Right cardiac atrium (tissue), 5 donors: ENCODE measurements at regions of chr5 and their contacts with region 1.

Region 1: DNA sequence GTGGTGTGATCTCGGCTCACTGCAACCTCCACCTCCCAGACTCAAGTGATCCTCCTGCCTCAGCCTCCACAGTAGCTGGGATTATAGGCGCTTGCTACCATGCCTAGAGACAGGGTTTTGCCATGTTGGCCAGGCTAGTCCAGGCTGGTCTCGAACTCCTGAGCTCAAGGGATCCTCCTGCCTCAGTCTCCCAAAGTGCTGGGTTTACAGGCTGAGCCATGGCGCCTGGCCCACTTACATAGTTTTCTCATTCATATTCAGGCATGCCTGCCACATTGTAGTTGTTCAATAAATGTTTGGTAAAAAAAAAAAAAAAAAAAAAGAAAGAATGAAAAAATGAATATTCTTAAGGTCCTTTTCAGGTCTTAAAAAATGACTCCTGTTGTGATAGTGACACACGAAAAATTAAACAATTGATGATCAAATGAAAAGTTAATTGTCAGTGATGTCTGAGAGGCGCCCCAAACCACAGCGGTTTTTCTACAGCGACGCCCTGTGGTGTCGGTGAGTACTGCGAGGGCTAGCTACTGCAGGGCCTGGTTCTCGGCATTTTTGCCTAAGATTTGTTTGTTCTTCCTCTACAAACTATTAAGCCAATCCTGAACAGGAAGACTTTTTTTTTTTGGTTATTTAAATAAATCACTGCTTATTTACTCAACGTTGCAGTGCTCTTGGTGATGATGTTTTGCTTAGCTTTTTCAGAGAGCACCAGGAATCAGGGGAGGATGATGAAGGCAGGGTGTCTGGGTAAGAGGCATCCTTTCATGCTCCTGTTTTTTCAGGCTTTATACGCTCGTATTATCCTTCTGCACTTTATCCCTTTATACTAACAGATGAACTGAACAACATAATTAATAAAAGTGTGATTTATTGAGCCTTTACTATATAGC is 67.0 kb upstream of the DPYSL3 start:
- DNase-seq: peak; percentile 59 to 88 (median 84)
- ATAC-seq: peak; percentile 51 to 65
- H3K4me3 ChIP-seq: no peak overlapping the region
- H3K27ac ChIP-seq: no peak overlapping the region
- H3K4me1 ChIP-seq: no peaks in the 10 kb centered on the region
- H3K27me3 ChIP-seq: no peaks in the 10 kb centered on the region

Region 2: DNA sequence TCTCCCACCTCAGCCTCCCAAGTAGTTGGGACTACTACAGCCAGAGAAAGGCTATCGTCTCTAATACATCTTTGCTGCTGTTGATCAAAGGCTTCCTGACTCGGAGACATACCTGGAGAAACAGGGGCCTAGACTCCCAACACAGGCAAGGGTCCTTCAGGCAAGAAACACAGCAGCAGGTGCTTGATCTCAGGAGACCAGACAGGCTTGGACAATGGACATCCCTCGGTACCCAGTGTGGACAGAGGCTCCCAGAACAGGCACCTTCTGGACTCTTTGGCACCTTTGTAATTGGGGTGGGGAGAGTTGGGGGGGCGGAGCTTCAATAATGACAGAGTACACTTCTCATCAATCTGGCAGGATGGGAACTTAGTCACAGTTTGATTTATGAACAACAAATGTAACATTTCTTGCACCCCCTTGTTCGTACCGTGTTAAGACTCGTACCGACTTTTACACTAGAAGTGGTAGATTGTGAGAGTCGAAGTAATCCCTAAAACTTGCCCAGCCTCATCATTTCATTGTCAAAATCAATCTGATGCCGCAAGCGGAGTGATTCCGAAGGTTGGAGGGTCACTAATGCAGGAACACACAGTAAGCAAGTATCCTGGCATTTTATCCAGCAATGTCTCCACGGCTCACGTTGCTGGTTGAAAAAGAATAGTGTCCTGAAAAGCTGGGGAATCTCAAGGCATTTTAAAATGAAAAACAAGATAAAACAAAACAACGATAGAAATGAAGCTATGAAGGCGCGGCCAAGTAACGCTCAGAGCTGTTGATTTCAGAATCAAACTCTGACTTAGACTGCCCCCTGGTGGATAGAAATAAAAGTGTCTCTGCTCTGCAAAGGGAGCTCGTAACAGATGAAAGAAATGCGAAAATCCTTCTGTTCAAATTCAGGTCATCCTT is 388.4 kb before region 1 on chr5:
- intact Hi-C with region 1: no loop called
- DNase-seq: peak in 2 of 3 donors; percentile 27 to 57
- ATAC-seq: peak; percentile 73 to 76
- H3K4me3 ChIP-seq: no peak overlapping the region
- H3K27ac ChIP-seq: no peak overlapping the region
- H3K4me1 ChIP-seq: no peaks in the 10 kb centered on the region
- H3K27me3 ChIP-seq: peaks cover 2% of the 10 kb centered on the region

Region 3: DNA sequence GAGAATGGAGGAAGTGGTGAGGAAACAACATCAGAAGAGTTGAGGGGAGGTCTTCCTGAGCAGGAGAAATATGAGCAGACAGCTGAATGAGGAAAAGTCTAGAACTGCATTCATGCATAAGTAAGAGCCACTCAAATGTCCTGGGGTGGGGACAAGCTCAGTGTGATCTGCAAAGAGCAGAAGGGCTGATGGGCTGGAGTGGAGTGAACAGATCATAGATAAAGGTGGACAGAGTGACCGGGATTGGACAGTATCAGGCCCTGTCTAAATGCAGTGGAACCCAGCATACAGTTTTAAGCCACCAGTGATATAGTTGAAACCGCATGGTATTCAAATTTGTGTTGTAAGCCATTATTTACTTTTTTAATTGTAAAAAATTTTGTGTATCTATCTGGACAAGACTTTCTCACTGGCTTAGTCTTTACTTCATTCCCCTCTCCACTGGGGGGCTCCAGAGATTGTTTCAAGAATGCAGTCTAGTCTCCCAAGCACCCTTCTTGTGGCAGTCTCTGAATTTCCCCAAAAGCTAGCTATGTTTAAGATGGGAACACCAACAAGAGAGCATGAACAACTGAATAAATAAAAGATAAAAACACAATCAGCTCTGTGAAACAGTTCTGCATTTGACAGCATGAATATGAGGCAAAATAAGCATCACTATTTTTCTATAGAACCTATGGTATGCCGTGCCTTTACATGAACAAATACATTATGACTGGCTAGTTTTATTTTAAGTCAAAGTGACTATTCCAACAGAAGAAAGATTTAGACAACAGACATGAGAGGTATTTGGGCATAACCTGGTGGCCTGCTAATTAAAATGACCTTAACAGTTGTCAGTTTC is 352.7 kb before region 1 on chr5:
- intact Hi-C with region 1: loop called (anchors 5 to 10 kb)
- DNase-seq: no peak
- ATAC-seq: peak; percentile 68 to 69
- H3K4me3 ChIP-seq: no peak overlapping the region
- H3K27ac ChIP-seq: no peak overlapping the region
- H3K4me1 ChIP-seq: no peaks in the 10 kb centered on the region
- H3K27me3 ChIP-seq: no peaks in the 10 kb centered on the region

Region 4: GRCh38 chr5:147391781-147392180 is 185.1 kb before region 1 on chr5:
- intact Hi-C with region 1: loop called in 1 of 4 experiments (anchors 10 kb)
- DNase-seq: peak in 1 of 3 donors; percentile 51
- ATAC-seq: peak; percentile 77 to 85
- H3K4me3 ChIP-seq: no peak overlapping the region
- H3K27ac ChIP-seq: no peak overlapping the region
- H3K4me1 ChIP-seq: peaks cover 4% of the 10 kb centered on the region
- H3K27me3 ChIP-seq: no peaks in the 10 kb centered on the region

Region 5: GRCh38 chr5:147453875-147454814 is 122.7 kb before region 1 on chr5:
- intact Hi-C with region 1: loop called in 2 of 4 experiments (anchors 5 kb)
- DNase-seq: peak; percentile 91 to 97 (median 97)
- ATAC-seq: peak; percentile 93 to 94
- H3K4me3 ChIP-seq: peak overlapping the region; percentile 65
- H3K27ac ChIP-seq: peak overlapping the region; percentile 81
- H3K4me1 ChIP-seq: no peaks in the 10 kb centered on the region
- H3K27me3 ChIP-seq: no peaks in the 10 kb centered on the region